ENCODE measurements at regions of chr20 and their contacts with region 1.

Region 1: DNA sequence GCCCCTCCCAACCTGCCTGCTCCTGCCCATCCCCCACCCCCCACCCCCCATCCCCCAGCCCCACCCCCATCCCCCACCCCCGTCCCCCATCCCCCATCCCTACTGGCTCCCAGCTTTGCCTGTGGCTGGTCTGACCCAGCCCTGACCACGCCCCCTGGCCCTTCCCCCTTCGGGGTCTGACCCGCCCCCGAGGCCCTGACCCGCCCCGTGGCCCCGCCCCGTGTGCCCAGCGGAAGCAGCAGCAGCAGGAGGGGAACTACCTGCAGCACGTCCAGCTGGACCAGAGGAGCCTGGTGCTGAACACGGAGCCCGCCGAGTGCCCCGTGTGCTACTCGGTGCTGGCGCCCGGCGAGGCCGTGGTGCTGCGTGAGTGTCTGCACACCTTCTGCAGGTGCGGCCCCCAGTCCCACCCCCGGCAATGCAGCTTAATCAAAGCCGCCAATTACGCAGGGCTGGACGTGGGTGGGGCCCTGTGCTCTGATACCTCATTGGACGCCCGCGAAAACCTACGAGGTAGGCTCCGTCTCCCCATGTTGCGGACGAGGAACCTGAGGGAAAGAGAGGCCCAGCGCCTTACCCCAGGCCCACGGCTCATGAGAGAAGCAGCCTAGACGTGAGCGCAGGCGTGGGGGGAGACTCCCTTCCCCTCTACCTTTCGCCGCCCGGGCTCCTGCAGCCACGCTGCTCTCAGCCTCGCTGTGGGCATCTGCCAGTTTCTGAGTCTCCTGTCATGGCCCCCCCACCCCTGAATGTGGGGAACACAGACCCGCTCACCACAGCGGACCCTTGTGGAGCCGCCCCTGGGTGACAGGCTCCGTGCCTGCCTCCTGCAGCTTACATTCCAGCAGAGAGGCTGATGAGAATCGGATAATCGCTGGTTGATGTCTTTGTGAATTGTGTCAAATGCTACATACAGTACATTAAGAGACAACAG is 12.8 kb downstream of the RBCK1 start:
- DNase-seq: no peak
- ATAC-seq: peak; percentile 52; the same call in 1 of the 2 replicates
- H3K4me3 ChIP-seq: no peak overlapping the region
- H3K27ac ChIP-seq: no peak overlapping the region
- H3K4me1 ChIP-seq: no peaks in the 10 kb centered on the region
- H3K27me3 ChIP-seq: no peaks in the 10 kb centered on the region
- CTCF ChIP-seq: no peak

Region 2: GRCh38 chr20:407133-407952 is 13.6 kb before region 1 on chr20:
- CTCF ChIA-PET with region 1: no interaction called
- POLR2A ChIA-PET with region 1: interaction called, 13 read pairs
- intact Hi-C with region 1: no loop called
- DNase-seq: peak; percentile 81
- ATAC-seq: peak; percentile 84
- H3K4me3 ChIP-seq: peak overlapping the region; percentile 72
- H3K27ac ChIP-seq: peak overlapping the region; percentile 75
- H3K4me1 ChIP-seq: peaks cover 35% of the 10 kb centered on the region
- H3K27me3 ChIP-seq: no peaks in the 10 kb centered on the region
- CTCF ChIP-seq: peak; percentile 45; the same call in 1 of the 2 replicates

Region 3: GRCh38 chr20:543369-544152 is 122.7 kb after region 1 on chr20 and contains the start of gene CSNK2A1:
- CTCF ChIA-PET with region 1: no interaction called
- POLR2A ChIA-PET with region 1: no interaction called
- intact Hi-C with region 1: no loop called
- DNase-seq: peak; percentile 97
- ATAC-seq: peak; percentile 96
- H3K4me3 ChIP-seq: peak within 1 kb of the TSS; percentile 90
- H3K27ac ChIP-seq: peak within 1 kb of the TSS; percentile 54
- H3K4me1 ChIP-seq: peaks cover 19% of the 10 kb centered on the region
- H3K27me3 ChIP-seq: no peaks in the 10 kb centered on the region
- CTCF ChIP-seq: no peak
- total RNA-seq, gene CSNK2A1: 147 and 161 TPM in 2 replicates